ENCODE measurements at regions of chr6 and their contacts with region 1.

Region 1: GRCh38 chr6:151209071-151209831 is 30.5 kb upstream of the AKAP12 start:
- DNase-seq: no peak
- H3K4me3 ChIP-seq: no peak overlapping the region
- H3K27ac ChIP-seq: no peak overlapping the region
- H3K4me1 ChIP-seq: no peaks in the 10 kb centered on the region
- H3K27me3 ChIP-seq: no peaks in the 10 kb centered on the region
- CTCF ChIP-seq: no peak
- POLR2A ChIP-seq: no peak

Region 2: GRCh38 chr6:150822932-150823331 is 386.3 kb before region 1 on chr6:
- intact Hi-C with region 1: loop called (anchors 5 kb)
- DNase-seq: no peak
- H3K4me3 ChIP-seq: no peak overlapping the region
- H3K27ac ChIP-seq: no peak overlapping the region
- H3K4me1 ChIP-seq: no peaks in the 10 kb centered on the region
- H3K27me3 ChIP-seq: no peaks in the 10 kb centered on the region
- CTCF ChIP-seq: no peak
- POLR2A ChIP-seq: no peak

Region 3: GRCh38 chr6:151566557-151566956 is 357.3 kb after region 1 on chr6:
- intact Hi-C with region 1: no loop called
- DNase-seq: no peak
- H3K4me3 ChIP-seq: no peak overlapping the region
- H3K27ac ChIP-seq: no peak overlapping the region
- H3K4me1 ChIP-seq: no peaks in the 10 kb centered on the region
- H3K27me3 ChIP-seq: no peaks in the 10 kb centered on the region
- CTCF ChIP-seq: no peak
- POLR2A ChIP-seq: no peak

Measured in breast epithelium (tissue), 4 donors.